ENCODE measurements at regions of chr2 and their contacts with region 1.

Region 1: DNA sequence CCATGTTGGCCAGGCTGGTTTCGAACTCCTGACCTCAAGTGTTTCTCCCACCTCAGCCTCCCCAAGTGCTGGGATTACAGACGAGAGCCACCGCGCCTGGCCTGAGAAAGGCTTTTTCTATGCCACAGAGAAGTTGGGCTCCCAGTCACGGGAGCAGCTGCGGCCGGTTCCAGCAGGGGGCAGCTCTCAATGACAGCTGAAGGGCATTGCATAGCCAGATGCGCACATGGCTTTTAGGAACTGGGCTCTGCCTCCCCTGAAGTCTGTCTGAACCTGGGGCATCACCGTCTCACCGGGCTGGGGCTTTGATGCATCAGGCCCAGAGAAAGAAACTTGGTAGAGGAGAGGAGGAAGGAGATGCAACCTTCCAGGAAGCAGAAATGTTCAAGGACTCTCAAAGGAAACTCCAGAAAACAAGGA is 84.2 kb upstream of the LAPTM4A start:
- DNase-seq: peak in 4 of 5 donors; percentile 36 to 54 (median 40)
- ATAC-seq: peak in 3 of 4 donors; percentile 35 to 51 (median 45)
- H3K4me3 ChIP-seq: no peak overlapping the region
- H3K27ac ChIP-seq: no peak overlapping the region
- H3K4me1 ChIP-seq: peaks cover 0 to 4% (median 0%) of the 10 kb centered on the region in 12 donors
- H3K27me3 ChIP-seq: peaks cover 0 to 3% (median 0%) of the 10 kb centered on the region in 9 donors
- CTCF ChIP-seq: peak; percentile 32 to 71 (median 46)
- POLR2A ChIP-seq: no peak

Region 2: GRCh38 chr2:20225294-20226151 is 89.9 kb after region 1 on chr2:
- intact Hi-C with region 1: loop called in 4 of 10 experiments (anchors 10 kb)
- DNase-seq: peak in 4 of 5 donors; percentile 31 to 63 (median 41)
- ATAC-seq: peak in 3 of 4 donors; percentile 78 to 87 (median 83)
- H3K4me3 ChIP-seq: peak overlapping the region; percentile 48 to 68 (median 56)
- H3K27ac ChIP-seq: no peak overlapping the region
- H3K4me1 ChIP-seq: peaks cover 0 to 29% (median 9%) of the 10 kb centered on the region in 12 donors
- H3K27me3 ChIP-seq: peaks cover 0 to 65% (median 12%) of the 10 kb centered on the region in 9 donors
- CTCF ChIP-seq: peak; percentile 17 to 63 (median 40)
- POLR2A ChIP-seq: no peak

Region 3: DNA sequence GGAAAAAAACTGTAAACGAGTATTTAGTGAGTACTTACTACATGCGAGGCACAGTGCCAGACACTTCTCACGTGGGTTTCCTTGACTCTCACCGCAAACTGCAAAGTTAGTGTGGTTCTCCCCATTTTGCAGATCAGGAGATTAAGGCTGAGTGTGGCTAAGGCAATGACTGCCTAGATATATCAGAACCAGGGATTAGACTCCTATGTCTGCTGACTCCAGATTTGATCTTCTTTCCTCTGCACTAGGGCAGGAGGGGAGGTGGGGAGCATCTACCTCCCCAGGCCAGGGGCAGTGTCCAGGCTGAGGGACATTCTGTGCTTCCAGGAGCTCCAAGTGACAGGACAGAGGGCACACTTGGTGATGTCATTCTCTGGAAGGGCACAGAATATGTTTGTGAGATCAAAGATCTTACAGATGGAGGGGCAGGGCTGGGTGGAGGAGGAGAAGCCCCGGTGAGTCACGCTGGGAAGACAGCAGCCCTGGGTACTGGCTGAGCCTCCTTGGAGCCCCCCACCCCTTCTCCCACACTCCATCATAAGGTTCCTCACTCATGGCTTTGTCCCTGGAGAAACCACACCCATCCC is 403.6 kb after region 1 on chr2:
- intact Hi-C with region 1: no loop called
- DNase-seq: no peak
- ATAC-seq: no peak
- H3K4me3 ChIP-seq: no peak overlapping the region
- H3K27ac ChIP-seq: no peak overlapping the region
- H3K4me1 ChIP-seq: peaks cover 0 to 40% (median 13%) of the 10 kb centered on the region in 12 donors
- H3K27me3 ChIP-seq: no peaks in the 10 kb centered on the region
- CTCF ChIP-seq: no peak
- POLR2A ChIP-seq: no peak

Region 4: DNA sequence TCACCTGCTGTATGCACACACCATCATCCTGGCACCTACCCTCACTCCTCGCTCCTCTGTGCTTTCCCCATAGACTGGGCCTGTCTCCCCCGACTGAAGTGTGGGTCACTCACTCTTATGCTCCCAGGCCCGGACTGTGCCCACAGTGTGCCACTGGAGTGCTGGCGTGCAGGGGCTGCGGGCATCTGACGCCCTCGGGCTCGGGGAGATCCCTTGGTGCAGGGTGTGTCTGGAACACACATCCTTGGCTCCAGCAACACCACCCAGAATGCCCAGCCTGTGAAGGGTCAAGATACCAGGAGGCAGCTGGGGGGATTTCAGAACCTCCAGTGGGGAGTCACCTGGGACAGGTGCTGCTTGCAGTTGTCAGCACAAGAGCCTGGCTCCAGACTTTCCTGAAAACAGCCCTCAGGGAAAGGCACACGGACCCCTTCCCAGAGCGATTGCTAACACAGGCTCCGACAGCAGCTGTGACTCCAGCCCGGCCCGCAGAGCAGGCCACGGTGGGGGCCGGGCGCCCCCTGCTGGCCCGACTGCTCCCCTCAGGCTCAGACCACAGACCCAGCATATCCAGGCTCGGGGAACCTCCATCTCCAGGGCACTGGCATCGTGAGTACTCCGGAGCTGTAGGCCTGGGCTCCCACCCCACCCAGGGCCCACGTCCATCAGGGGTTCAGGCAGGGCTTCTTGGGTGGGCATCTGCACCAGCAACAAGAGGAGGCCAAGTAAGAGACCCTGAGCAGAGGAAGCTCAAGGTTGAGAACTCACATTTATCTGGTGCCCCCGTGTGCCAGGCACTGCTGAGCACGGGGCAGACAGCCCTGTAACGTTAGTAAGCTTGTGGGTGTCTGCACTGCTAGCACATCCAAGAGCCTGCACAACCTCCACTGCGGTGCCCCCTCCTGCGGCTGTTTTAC is 506.7 kb after region 1 on chr2:
- intact Hi-C with region 1: loop called in 1 of 10 experiments (anchors 10 kb)
- DNase-seq: peak; percentile 76 to 89 (median 79)
- ATAC-seq: peak; percentile 82 to 91 (median 88)
- H3K4me3 ChIP-seq: no peak overlapping the region
- H3K27ac ChIP-seq: peak overlapping the region in 6 of 12 donors; percentile 1 to 90 (median 52)
- H3K4me1 ChIP-seq: peaks cover 5 to 45% (median 23%) of the 10 kb centered on the region in 12 donors
- H3K27me3 ChIP-seq: no peaks in the 10 kb centered on the region
- CTCF ChIP-seq: peak; percentile 88 to 98 (median 96)
- POLR2A ChIP-seq: peak in 1 of 2 donors; percentile 15

Measured in heart left ventricle (tissue), 16 donors.